ENCODE measurements at regions of chr3 and their contacts with region 1.

Region 1: DNA sequence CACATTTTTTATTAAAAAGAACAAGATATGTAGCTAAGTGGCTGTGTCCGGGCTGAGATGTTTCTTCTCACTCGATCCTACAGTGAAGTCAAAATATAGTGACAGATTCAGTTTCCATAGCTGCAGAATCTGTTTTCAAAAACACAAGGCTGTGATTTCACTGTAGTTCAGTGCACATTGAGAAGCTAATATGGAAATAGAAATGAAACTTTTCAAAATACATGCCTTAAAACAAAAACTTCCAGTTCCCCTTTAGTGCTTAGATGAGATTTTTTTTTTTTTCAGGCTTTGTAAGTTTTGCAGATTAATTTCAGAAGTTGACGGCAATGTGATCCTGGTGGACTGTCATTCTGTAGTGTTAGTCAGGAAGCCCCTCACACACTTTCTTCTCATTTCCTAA is 23.8 kb upstream of the TRAK1 start:
- DNase-seq: peak; percentile 86
- ATAC-seq: peak; percentile 91
- H3K4me3 ChIP-seq: peak overlapping the region; percentile 48; the same call in 1 of the 2 replicates
- H3K27ac ChIP-seq: peak overlapping the region; percentile 86
- H3K4me1 ChIP-seq: peaks cover 35% of the 10 kb centered on the region
- H3K27me3 ChIP-seq: no peaks in the 10 kb centered on the region
- CTCF ChIP-seq: no peak
- EP300 ChIP-seq: peak; percentile 51 to 91; a peak in 3 of 4 replicates
- POLR2A ChIP-seq: no peak
- RAD21 ChIP-seq: no peak

Region 2: GRCh38 chr3:42043027-42043796 is 24.1 kb before region 1 on chr3:
- CTCF ChIA-PET with region 1: interaction called, 4 read pairs
- POLR2A ChIA-PET with region 1: interaction called, 10 read pairs
- RAD21 ChIA-PET with region 1: interaction called, 4 read pairs
- SMC1A ChIA-PET with region 1: interaction called, 47 read pairs
- in situ Hi-C with region 1: no loop called
- intact Hi-C with region 1: no loop called
- DNase-seq: no peak
- ATAC-seq: peak; percentile 62
- H3K4me3 ChIP-seq: no peak overlapping the region
- H3K27ac ChIP-seq: no peak overlapping the region
- H3K4me1 ChIP-seq: peaks cover 49% of the 10 kb centered on the region
- H3K27me3 ChIP-seq: no peaks in the 10 kb centered on the region
- CTCF ChIP-seq: no peak
- EP300 ChIP-seq: no peak
- POLR2A ChIP-seq: no peak
- RAD21 ChIP-seq: no peak

Region 3: DNA sequence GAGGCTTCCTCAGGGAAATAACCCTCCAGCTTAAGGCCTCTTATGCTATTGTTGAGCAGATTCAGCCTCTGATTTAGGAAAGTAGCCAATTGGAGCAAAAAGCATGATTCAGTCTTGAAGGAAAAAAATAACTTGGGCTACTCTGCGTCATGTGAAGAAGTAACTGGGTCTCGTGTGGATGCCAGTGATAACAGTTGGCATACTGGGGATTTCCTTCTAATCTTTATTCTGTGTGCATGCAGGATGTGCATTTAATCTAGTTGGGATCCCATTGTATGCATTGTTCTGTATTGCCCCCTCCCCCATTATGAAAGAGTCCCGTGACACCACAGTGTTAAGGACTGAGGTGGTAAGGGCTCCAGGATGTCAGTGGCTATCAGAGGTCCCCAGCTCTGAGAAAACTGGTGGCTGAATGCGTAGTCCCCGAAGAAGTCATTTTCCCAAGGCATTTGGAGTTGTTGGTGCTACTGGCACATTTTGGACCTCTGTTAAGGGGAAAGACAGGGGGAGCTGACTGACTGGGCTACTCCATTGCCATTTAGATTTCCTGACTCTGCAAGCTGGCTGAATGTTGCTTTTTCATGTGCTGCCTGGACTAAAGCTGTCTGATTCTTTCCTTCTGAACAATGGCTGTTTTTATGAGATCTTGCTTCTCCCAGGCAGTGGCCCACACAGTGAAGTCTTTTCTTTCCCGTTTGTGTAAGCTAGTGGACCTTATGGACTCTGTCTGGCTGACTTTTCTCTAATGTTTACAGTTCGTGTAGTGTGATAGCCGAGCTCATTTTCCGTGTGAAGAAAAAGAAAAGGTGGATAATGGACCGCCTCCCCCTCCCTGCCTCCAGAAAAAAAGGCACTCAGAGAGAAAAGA is 14.6 kb before region 1 on chr3:
- CTCF ChIA-PET with region 1: interaction called, 5 read pairs
- POLR2A ChIA-PET with region 1: interaction called, 10 read pairs
- RAD21 ChIA-PET with region 1: interaction called, 5 read pairs
- SMC1A ChIA-PET with region 1: interaction called, 47 read pairs
- in situ Hi-C with region 1: no loop called
- intact Hi-C with region 1: no loop called
- DNase-seq: no peak
- ATAC-seq: no peak
- H3K4me3 ChIP-seq: no peak overlapping the region
- H3K27ac ChIP-seq: peak overlapping the region; percentile 57
- H3K4me1 ChIP-seq: peaks cover 38% of the 10 kb centered on the region
- H3K27me3 ChIP-seq: no peaks in the 10 kb centered on the region
- CTCF ChIP-seq: no peak
- EP300 ChIP-seq: no peak
- POLR2A ChIP-seq: no peak
- RAD21 ChIP-seq: no peak

Region 4: GRCh38 chr3:42081838-42082473 is 14.6 kb after region 1 on chr3:
- CTCF ChIA-PET with region 1: interaction called, 8 read pairs
- POLR2A ChIA-PET with region 1: interaction called, 5 read pairs
- RAD21 ChIA-PET with region 1: interaction called, 8 read pairs
- SMC1A ChIA-PET with region 1: interaction called, 28 read pairs
- in situ Hi-C with region 1: no loop called
- intact Hi-C with region 1: no loop called
- DNase-seq: no peak
- ATAC-seq: peak; percentile 68
- H3K4me3 ChIP-seq: peak overlapping the region; percentile 17; the same call in 1 of the 2 replicates
- H3K27ac ChIP-seq: peak overlapping the region; percentile 76
- H3K4me1 ChIP-seq: peaks cover 44% of the 10 kb centered on the region
- H3K27me3 ChIP-seq: no peaks in the 10 kb centered on the region
- CTCF ChIP-seq: no peak
- EP300 ChIP-seq: no peak
- POLR2A ChIP-seq: no peak
- RAD21 ChIP-seq: no peak

Region 5: GRCh38 chr3:42090973-42091731 is 23.8 kb after region 1 on chr3 and contains the start of gene TRAK1:
- CTCF ChIA-PET with region 1: interaction called, 3 read pairs
- POLR2A ChIA-PET with region 1: interaction called, 4 read pairs
- RAD21 ChIA-PET with region 1: interaction called, 17 read pairs
- SMC1A ChIA-PET with region 1: interaction called, 28 read pairs
- in situ Hi-C with region 1: no loop called
- intact Hi-C with region 1: loop called (anchors 2 kb)
- DNase-seq: no peak
- ATAC-seq: no peak
- H3K4me3 ChIP-seq: peak within 1 kb of the TSS; percentile 23; the same call in 1 of the 2 replicates
- H3K27ac ChIP-seq: peak within 1 kb of the TSS; percentile 63
- H3K4me1 ChIP-seq: peaks cover 79% of the 10 kb centered on the region
- H3K27me3 ChIP-seq: no peaks in the 10 kb centered on the region
- CTCF ChIP-seq: no peak
- EP300 ChIP-seq: no peak
- POLR2A ChIP-seq: no peak
- RAD21 ChIP-seq: no peak
- polyA plus RNA-seq, gene TRAK1: 6.6 to 6.7 TPM